ENCODE measurements at regions of chr16 and their contacts with region 1.

Region 1: DNA sequence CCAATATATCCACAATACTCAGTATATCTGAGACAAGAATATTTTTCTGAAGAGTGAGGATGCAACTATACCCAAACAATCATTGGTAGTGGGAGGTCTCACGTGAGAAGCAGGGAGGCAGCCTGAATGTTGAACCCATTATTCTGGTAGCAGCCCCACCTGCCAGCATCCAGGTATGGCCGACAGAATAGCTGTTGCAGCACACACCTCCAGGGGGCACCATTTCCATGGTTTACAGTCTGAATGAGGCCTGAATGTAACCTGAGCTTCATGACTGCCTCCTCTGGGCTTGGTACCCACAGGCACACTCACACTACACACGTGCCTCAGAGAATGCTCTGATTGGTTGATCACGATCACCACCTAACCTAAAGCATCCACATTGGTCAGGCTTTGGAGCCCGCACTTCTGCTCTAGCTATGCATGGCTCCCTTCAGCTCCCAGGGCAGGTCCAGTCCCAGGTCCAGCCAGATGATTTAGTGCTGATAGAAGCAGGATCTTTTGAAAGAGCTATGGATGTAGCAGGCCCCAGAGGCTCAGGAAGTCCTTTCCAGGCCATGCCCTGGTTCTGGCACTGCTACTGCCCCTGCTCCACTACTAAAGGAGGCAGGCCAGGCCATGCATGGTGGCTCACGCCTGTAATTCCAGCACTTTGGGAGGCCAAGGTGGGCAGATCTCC is 11.0 kb upstream of the CBFB start:
- DNase-seq: peak; percentile 86
- H3K4me3 Mint-ChIP-seq: no peak overlapping the region
- H3K27ac Mint-ChIP-seq: peak overlapping the region; percentile 38
- H3K4me1 Mint-ChIP-seq: peaks cover 35% of the 10 kb centered on the region
- H3K27me3 Mint-ChIP-seq: no peaks in the 10 kb centered on the region

Region 2: DNA sequence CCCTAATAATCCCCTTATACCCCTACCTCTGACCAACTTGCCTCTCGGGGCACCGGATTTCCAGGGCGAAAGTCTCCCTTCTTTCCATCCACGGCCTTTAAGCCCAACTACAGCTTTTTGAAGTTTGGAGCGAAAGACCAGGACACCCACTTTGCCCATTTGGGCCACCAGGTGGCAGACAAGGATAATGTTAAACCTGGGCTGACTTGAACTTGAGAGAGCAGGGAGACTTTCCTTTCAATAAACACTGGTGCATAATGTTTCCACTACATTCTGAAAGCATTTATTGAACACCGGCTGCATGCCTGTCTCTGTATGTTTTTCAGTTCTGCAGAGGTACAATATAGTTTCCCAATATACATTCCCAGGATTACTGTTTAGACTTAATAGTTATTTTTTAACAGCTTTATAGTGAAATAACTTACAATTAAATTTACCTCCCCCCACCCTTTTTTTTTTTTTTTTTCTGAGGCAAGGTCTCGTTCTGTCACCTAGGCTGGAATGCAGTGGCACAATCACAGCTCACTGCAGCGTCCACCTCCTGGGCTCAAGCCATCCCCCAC is 63.8 kb before region 1 on chr16:
- intact Hi-C with region 1: loop called (anchors 2 kb)
- DNase-seq: peak; percentile 72
- H3K4me3 Mint-ChIP-seq: no peak overlapping the region
- H3K27ac Mint-ChIP-seq: no peak overlapping the region
- H3K4me1 Mint-ChIP-seq: peaks cover 18% of the 10 kb centered on the region
- H3K27me3 Mint-ChIP-seq: peaks cover 24% of the 10 kb centered on the region

Region 3: GRCh38 chr16:66977341-66978113 is 40.4 kb before region 1 on chr16:
- intact Hi-C with region 1: loop called (anchors 1 kb)
- DNase-seq: peak; percentile 83
- H3K4me3 Mint-ChIP-seq: no peak overlapping the region
- H3K27ac Mint-ChIP-seq: peak overlapping the region; percentile 68
- H3K4me1 Mint-ChIP-seq: peaks cover 50% of the 10 kb centered on the region
- H3K27me3 Mint-ChIP-seq: no peaks in the 10 kb centered on the region

Region 4: DNA sequence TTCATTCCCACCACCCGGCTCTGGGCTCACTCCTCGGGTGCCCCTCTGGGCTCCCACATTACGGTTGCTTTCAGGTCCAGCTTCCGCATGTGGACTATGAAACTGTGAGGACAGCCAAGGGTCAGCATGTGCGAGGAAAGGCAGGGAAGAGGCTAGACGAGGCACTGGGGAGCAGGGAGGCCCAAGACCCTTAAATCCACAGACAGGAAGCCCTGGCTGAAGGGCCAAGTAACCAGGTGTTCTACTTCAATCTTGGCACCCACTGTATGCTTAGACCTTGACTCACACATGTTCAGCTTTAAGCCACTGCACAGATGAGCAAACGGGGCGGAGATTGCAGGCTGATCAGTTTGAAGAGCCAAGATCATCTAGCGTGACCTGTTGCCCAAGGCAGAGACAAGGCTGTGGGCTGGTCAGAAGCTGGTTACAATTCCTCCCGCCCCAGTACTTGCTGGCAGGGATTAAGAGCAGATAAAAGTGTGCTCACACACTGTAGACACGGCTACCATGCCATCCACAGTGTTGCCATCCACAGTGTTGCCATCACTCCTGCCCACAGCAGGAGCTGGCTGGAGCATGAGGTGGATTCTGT is 29.7 kb before region 1 on chr16 and contains the start of gene CES4A:
- intact Hi-C with region 1: loop called (anchors 2 kb)
- DNase-seq: no peak
- H3K4me3 Mint-ChIP-seq: peak within 1 kb of the TSS; percentile 61
- H3K27ac Mint-ChIP-seq: peak within 1 kb of the TSS; percentile 88
- H3K4me1 Mint-ChIP-seq: peaks cover 40% of the 10 kb centered on the region
- H3K27me3 Mint-ChIP-seq: no peaks in the 10 kb centered on the region
- total RNA-seq, gene CES4A: 29.8 and 30.1 TPM in 2 replicates

Region 5: GRCh38 chr16:67104061-67104460 is 86.1 kb after region 1 on chr16:
- intact Hi-C with region 1: loop called (anchors 1 kb)
- DNase-seq: no peak
- H3K4me3 Mint-ChIP-seq: no peak overlapping the region
- H3K27ac Mint-ChIP-seq: no peak overlapping the region
- H3K4me1 Mint-ChIP-seq: peaks cover 7% of the 10 kb centered on the region
- H3K27me3 Mint-ChIP-seq: no peaks in the 10 kb centered on the region

Region 6: DNA sequence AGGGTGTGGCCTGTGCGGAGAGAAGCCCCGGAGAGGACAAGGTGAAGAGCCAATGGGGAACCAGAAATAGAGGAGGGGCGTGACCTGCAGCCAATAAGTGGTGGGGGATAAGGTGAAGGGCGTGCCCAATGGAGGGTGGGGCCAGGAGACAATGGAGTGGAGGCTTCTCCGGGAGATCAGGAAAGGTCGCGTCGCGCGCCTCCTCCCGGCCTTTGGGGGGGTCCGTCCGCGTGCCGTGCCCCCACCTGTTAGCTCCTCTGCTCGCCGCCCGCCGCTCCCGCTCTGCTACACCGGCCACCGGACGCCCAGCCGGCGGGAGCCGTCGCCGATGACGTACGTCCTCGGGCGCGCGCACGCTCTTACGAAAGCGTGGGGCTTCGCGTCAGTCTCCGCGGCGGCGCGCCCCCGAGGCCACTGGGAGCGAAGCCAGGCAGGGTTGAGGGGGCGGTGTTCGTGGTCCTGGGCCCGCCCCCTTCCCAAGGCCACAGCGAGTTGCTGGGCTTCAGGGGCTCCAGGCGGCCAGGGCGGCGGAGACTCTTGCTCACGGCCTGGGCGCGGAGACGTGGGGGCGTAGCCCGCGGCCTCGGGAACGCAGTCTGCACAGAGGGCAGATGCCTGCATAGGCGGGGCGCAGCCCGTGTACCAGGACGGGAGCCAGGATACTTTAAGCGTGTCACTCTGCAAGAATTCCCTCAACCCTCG is 165.8 kb after region 1 on chr16 and contains the start of gene MATCAP1:
- intact Hi-C with region 1: loop called (anchors 10 kb)
- DNase-seq: peak; percentile 95
- H3K4me3 Mint-ChIP-seq: peak within 1 kb of the TSS; percentile 70
- H3K27ac Mint-ChIP-seq: no peak within 1 kb of the TSS
- H3K4me1 Mint-ChIP-seq: peaks cover 12% of the 10 kb centered on the region
- H3K27me3 Mint-ChIP-seq: peaks cover 7% of the 10 kb centered on the region
- total RNA-seq, gene MATCAP1: 57.1 and 59.5 TPM in 2 replicates